A549 (cell line): ENCODE measurements at regions of chr17 and their contacts with region 1.

Region 1: GRCh38 chr17:60641810-60642220 is 35.8 kb upstream of the BCAS3 start:
- DNase-seq: peak; percentile 81 to 85
- ATAC-seq: peak; percentile 70 to 85
- H3K4me3 ChIP-seq: no peak overlapping the region
- H3K27ac ChIP-seq: no peak overlapping the region
- H3K4me1 ChIP-seq: peaks cover 10% of the 10 kb centered on the region
- CTCF ChIP-seq: peak; percentile 56
- EP300 ChIP-seq: no peak
- POLR2A ChIP-seq: no peak
- RAD21 ChIP-seq: peak; percentile 48 to 62

Region 2: GRCh38 chr17:60442271-60443173 is 199.3 kb before region 1 on chr17:
- CTCF ChIA-PET with region 1: interaction called, 11 read pairs
- POLR2A ChIA-PET with region 1: no interaction called
- DNase-seq: no peak
- ATAC-seq: peak; percentile 13 to 26; a peak in 1 of 6 replicates
- H3K4me3 ChIP-seq: no peak overlapping the region
- H3K27ac ChIP-seq: no peak overlapping the region
- H3K4me1 ChIP-seq: peaks cover 5% of the 10 kb centered on the region; the same call in 2 of the 3 replicates
- CTCF ChIP-seq: no peak
- EP300 ChIP-seq: no peak
- POLR2A ChIP-seq: no peak
- RAD21 ChIP-seq: no peak

Region 3: DNA sequence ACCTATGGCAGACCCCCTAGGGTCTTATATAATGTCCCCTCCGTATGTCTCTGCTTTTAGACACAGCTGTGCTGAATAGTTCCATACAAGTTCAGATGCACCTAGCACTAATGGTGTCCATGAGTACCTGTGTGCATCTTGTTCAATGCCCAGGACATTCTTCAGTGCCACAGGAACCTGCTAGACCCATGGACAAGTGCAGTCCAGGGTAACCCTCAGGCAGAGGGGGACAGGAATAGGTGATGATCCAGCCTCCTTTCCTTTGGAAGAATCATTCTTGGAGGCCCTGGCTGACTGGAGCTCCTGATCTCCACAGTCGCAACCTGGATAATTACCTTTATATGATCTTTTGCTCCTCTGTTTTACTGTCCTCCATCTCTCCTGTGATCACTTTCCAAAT is 70.3 kb before region 1 on chr17:
- CTCF ChIA-PET with region 1: interaction called, 41 read pairs
- POLR2A ChIA-PET with region 1: no interaction called
- DNase-seq: no peak
- ATAC-seq: 0 out of 6 replicates have a peak, but pooled peaks of 1 of the 2 experiments have one; percentile 49
- H3K4me3 ChIP-seq: no peak overlapping the region
- H3K27ac ChIP-seq: no peak overlapping the region
- H3K4me1 ChIP-seq: no peaks in the 10 kb centered on the region
- CTCF ChIP-seq: no peak
- EP300 ChIP-seq: no peak
- POLR2A ChIP-seq: no peak
- RAD21 ChIP-seq: no peak

Region 4: DNA sequence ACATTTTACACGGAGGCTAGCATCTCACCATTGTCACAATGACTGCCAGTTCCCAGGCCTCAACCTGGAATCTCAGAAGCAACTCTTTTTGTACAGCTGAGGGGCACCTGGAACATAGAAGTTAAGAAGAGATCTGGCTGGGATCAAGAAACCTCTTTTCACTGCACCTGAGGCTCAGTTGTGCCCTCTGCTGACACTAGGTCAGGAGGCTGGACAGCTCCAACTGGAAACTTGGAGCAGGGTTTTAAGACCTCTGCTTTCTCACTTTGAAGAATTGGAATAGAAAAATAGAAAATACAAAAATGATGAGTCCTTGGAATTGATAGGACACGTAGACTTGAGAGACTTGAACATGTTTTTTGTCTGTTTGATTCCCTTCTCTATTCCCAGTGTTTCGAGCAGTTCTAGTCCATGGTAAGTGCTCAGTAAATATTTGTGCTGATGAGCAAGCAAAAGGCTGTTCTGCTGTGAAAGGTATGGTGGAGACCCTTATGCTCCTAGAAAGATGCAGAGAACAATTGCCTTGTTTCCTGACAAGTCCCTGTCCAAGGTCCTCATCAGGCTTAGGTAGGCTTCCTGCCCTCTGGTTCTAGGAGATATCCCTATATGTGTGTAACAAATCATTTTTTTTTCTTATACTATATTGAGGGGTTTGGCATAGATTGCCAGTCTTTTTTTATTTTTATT is 55.4 kb before region 1 on chr17:
- CTCF ChIA-PET with region 1: interaction called, 10 read pairs
- POLR2A ChIA-PET with region 1: no interaction called
- DNase-seq: peak in 1 of 2 experiments; percentile 51
- ATAC-seq: peak; percentile 82 to 87; a peak in 5 of 6 replicates
- H3K4me3 ChIP-seq: no peak overlapping the region
- H3K27ac ChIP-seq: no peak overlapping the region
- H3K4me1 ChIP-seq: no peaks in the 10 kb centered on the region
- CTCF ChIP-seq: peak; percentile 55
- EP300 ChIP-seq: no peak
- POLR2A ChIP-seq: no peak
- RAD21 ChIP-seq: peak; percentile 48 to 58

Region 5: GRCh38 chr17:60610473-60610872 is 31.3 kb before region 1 on chr17:
- CTCF ChIA-PET with region 1: interaction called, 34 read pairs
- POLR2A ChIA-PET with region 1: no interaction called
- DNase-seq: no peak
- ATAC-seq: no peak
- H3K4me3 ChIP-seq: no peak overlapping the region
- H3K27ac ChIP-seq: no peak overlapping the region
- H3K4me1 ChIP-seq: peaks cover 24% of the 10 kb centered on the region
- CTCF ChIP-seq: no peak
- EP300 ChIP-seq: no peak
- POLR2A ChIP-seq: no peak
- RAD21 ChIP-seq: no peak

Region 6: DNA sequence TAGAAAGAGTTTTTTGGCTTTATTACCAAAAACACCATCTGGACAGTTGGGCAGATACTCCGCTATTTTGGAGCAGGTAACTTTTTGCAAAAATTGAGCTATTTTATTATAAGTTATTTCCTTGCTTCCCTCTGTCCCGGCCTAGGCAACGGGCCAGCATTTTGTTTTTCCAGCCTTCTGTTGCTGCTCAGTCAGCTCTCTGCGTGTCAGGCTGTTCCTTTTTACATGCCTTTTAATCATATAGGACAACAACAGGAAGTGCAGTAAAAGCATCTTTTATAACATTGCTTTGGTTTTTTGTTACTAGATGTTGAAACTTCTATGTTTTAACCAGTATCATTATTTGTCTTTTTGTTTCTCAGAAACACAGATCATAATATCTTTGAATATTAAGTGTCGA is 11.5 kb before region 1 on chr17:
- CTCF ChIA-PET with region 1: interaction called, 80 read pairs
- POLR2A ChIA-PET with region 1: no interaction called
- DNase-seq: no peak
- ATAC-seq: no peak
- H3K4me3 ChIP-seq: no peak overlapping the region
- H3K27ac ChIP-seq: no peak overlapping the region
- H3K4me1 ChIP-seq: peaks cover 7% of the 10 kb centered on the region; the same call in 2 of the 3 replicates
- CTCF ChIP-seq: no peak
- EP300 ChIP-seq: no peak
- POLR2A ChIP-seq: no peak
- RAD21 ChIP-seq: no peak

Region 7: GRCh38 chr17:60675997-60676396 is 34.2 kb after region 1 on chr17:
- CTCF ChIA-PET with region 1: interaction called, 12 read pairs
- POLR2A ChIA-PET with region 1: no interaction called
- DNase-seq: no peak
- ATAC-seq: no peak
- H3K4me3 ChIP-seq: no peak overlapping the region
- H3K27ac ChIP-seq: no peak overlapping the region
- H3K4me1 ChIP-seq: peaks cover 9% of the 10 kb centered on the region; the same call in 2 of the 3 replicates
- CTCF ChIP-seq: no peak
- EP300 ChIP-seq: no peak
- POLR2A ChIP-seq: no peak
- RAD21 ChIP-seq: no peak